BJ (cell line): ENCODE measurements at regions of chr11 and their contacts with region 1.

Region 1: GRCh38 chr11:1564535-1565172 is 7.4 kb downstream of the DUSP8 start:
- DNase-seq: peak; percentile 60
- H3K4me3 ChIP-seq: no peak overlapping the region
- H3K27me3 ChIP-seq: no peaks in the 10 kb centered on the region
- CTCF ChIP-seq: no peak

Region 2: GRCh38 chr11:1339066-1339675 is 225.5 kb before region 1 on chr11:
- CTCF ChIA-PET with region 1: no interaction called
- POLR2A ChIA-PET with region 1: interaction called, 13 read pairs
- DNase-seq: no peak
- H3K4me3 ChIP-seq: no peak overlapping the region
- H3K27me3 ChIP-seq: no peaks in the 10 kb centered on the region
- CTCF ChIP-seq: no peak

Region 3: GRCh38 chr11:1373536-1374214 is 191.0 kb before region 1 on chr11:
- CTCF ChIA-PET with region 1: no interaction called
- POLR2A ChIA-PET with region 1: no interaction called
- DNase-seq: no peak
- H3K4me3 ChIP-seq: no peak overlapping the region
- H3K27me3 ChIP-seq: peaks cover 4% of the 10 kb centered on the region
- CTCF ChIP-seq: no peak

Region 4: GRCh38 chr11:1852877-1853276 is 288.2 kb after region 1 on chr11 and contains the start of gene LSP1:
- CTCF ChIA-PET with region 1: no interaction called
- POLR2A ChIA-PET with region 1: no interaction called
- DNase-seq: no peak
- H3K4me3 ChIP-seq: no peak within 1 kb of the TSS
- H3K27me3 ChIP-seq: no peaks in the 10 kb centered on the region; the same call in none of the 2 replicates
- CTCF ChIP-seq: no peak
- polyA plus RNA-seq, gene LSP1: not detected in 2 replicates